PC-3 (cell line): ENCODE measurements at regions of chr1 and their contacts with region 1.

Region 1: DNA sequence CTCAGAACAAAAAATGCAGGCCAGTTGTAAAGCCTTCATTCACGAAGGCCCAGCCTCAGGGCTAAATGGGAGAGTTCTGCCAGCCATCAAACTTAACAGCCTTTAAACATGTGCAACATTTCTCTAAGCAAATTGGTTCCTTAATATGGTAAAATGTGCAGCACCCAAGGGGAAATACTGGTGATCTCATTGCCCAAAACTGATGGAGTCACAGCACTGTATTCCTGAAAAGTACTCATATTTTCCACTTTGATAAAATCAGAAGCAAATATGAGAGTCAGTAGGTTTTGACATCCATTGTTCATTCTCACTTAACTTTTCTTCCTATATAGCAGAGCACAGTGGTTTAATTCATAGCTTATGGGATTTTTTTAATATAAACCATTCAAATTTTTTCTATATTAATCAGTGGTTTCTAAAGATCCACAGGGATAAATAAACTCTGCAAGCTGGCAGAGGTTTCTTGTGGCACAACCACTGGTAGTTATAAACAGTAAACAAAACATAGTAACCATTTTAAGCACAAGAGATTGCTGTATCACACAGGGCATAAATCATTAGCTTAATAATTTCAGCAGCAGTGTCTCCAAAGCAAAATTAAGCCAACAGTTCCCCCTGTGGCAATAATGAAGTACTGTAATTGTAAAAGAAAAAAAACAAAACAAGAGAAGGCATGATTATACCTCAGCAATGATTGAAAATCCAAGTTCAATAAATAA is 106.9 kb upstream of the LYPLAL1 start:
- DNase-seq: peak; percentile 88
- ATAC-seq: peak; percentile 84
- H3K4me3 ChIP-seq: no peak overlapping the region
- H3K27ac ChIP-seq: peak overlapping the region; percentile 61
- H3K4me1 ChIP-seq: peaks cover 17% of the 10 kb centered on the region
- H3K27me3 ChIP-seq: no peaks in the 10 kb centered on the region
- CTCF ChIP-seq: peak; percentile 97

Region 2: GRCh38 chr1:218361298-218362065 is 705.3 kb before region 1 on chr1:
- CTCF ChIA-PET with region 1: interaction called, 3 read pairs
- POLR2A ChIA-PET with region 1: no interaction called
- intact Hi-C with region 1: loop called (anchors 1 kb)
- DNase-seq: peak; percentile 71
- ATAC-seq: peak; percentile 78
- H3K4me3 ChIP-seq: no peak overlapping the region
- H3K27ac ChIP-seq: peak overlapping the region; percentile 15
- H3K4me1 ChIP-seq: peaks cover 11% of the 10 kb centered on the region; the same call in 1 of the 2 replicates
- H3K27me3 ChIP-seq: no peaks in the 10 kb centered on the region
- CTCF ChIP-seq: peak; percentile 94

Region 3: DNA sequence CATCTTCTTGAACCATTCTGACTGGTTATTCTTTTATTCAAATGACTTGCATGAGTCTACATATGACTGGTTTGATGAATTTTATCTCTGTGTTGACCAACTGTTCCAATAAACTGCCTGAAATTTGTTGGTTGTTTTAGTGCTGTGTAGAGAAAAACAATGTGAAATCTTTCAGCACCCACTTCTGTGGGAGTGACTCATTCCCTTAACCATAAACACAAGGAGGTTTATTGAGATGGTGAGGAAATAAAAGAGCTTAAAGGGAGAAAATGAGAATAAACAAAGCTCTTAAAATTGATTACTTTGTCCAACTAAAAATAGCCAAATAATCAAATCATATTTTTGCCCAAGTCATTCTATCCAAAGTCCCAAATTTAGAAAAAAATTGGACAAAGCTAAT is 380.5 kb before region 1 on chr1:
- CTCF ChIA-PET with region 1: interaction called, 6 read pairs
- POLR2A ChIA-PET with region 1: no interaction called
- intact Hi-C with region 1: loop called (anchors 1 kb)
- DNase-seq: peak; percentile 82
- ATAC-seq: peak; percentile 84
- H3K4me3 ChIP-seq: no peak overlapping the region
- H3K27ac ChIP-seq: no peak overlapping the region
- H3K4me1 ChIP-seq: peaks cover 7% of the 10 kb centered on the region; the same call in 1 of the 2 replicates
- H3K27me3 ChIP-seq: no peaks in the 10 kb centered on the region
- CTCF ChIP-seq: no peak

Region 4: GRCh38 chr1:218804014-218804785 is 262.6 kb before region 1 on chr1:
- CTCF ChIA-PET with region 1: interaction called, 5 read pairs
- POLR2A ChIA-PET with region 1: no interaction called
- intact Hi-C with region 1: loop called (anchors 5 kb)
- DNase-seq: peak; percentile 93
- ATAC-seq: peak; percentile 92
- H3K4me3 ChIP-seq: no peak overlapping the region
- H3K27ac ChIP-seq: peak overlapping the region; percentile 77
- H3K4me1 ChIP-seq: peaks cover 31% of the 10 kb centered on the region
- H3K27me3 ChIP-seq: no peaks in the 10 kb centered on the region
- CTCF ChIP-seq: no peak

Region 5: GRCh38 chr1:218945050-218945449 is 121.7 kb before region 1 on chr1:
- CTCF ChIA-PET with region 1: no interaction called
- POLR2A ChIA-PET with region 1: no interaction called
- intact Hi-C with region 1: loop called (anchors 2 kb)
- DNase-seq: peak; percentile 93
- ATAC-seq: peak; percentile 77
- H3K4me3 ChIP-seq: no peak overlapping the region
- H3K27ac ChIP-seq: peak overlapping the region; percentile 62
- H3K4me1 ChIP-seq: peaks cover 25% of the 10 kb centered on the region
- H3K27me3 ChIP-seq: no peaks in the 10 kb centered on the region
- CTCF ChIP-seq: no peak

Region 6: DNA sequence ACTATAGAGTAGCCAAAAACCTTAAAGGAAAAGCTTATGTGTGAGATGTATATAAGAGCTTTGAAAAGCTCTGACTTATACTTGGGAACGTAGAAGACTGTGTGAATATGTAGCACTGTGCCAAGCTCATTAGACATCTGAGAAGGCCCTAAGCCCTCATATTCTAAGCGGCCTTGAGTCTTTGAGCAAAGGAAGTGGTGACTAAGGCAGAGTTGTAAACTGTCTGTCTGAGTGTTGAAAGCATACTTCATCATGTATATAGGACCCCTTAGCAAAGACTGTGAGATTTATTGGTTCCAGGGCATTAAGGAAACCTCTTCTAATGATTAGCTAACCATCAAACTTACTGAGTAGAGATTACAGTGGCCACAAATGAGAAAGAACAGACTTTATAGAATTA is 46.4 kb before region 1 on chr1:
- CTCF ChIA-PET with region 1: no interaction called
- POLR2A ChIA-PET with region 1: no interaction called
- intact Hi-C with region 1: no loop called
- DNase-seq: no peak
- ATAC-seq: no peak
- H3K4me3 ChIP-seq: no peak overlapping the region
- H3K27ac ChIP-seq: no peak overlapping the region
- H3K4me1 ChIP-seq: no peaks in the 10 kb centered on the region
- H3K27me3 ChIP-seq: no peaks in the 10 kb centered on the region
- CTCF ChIP-seq: no peak

Region 7: GRCh38 chr1:219049501-219049900 is 17.3 kb before region 1 on chr1:
- CTCF ChIA-PET with region 1: no interaction called
- POLR2A ChIA-PET with region 1: no interaction called
- intact Hi-C with region 1: no loop called
- DNase-seq: peak; percentile 11
- ATAC-seq: no peak
- H3K4me3 ChIP-seq: no peak overlapping the region
- H3K27ac ChIP-seq: no peak overlapping the region
- H3K4me1 ChIP-seq: no peaks in the 10 kb centered on the region
- H3K27me3 ChIP-seq: no peaks in the 10 kb centered on the region
- CTCF ChIP-seq: no peak

Region 8: GRCh38 chr1:219081943-219082925 is 15.4 kb after region 1 on chr1:
- CTCF ChIA-PET with region 1: no interaction called
- POLR2A ChIA-PET with region 1: no interaction called
- intact Hi-C with region 1: no loop called
- DNase-seq: no peak
- ATAC-seq: no peak
- H3K4me3 ChIP-seq: no peak overlapping the region
- H3K27ac ChIP-seq: no peak overlapping the region
- H3K4me1 ChIP-seq: peaks cover 27% of the 10 kb centered on the region
- H3K27me3 ChIP-seq: no peaks in the 10 kb centered on the region
- CTCF ChIP-seq: no peak

Region 9: GRCh38 chr1:219660666-219661463 is 594.1 kb after region 1 on chr1:
- CTCF ChIA-PET with region 1: no interaction called
- POLR2A ChIA-PET with region 1: no interaction called
- intact Hi-C with region 1: loop called (anchors 10 kb)
- DNase-seq: peak; percentile 99
- ATAC-seq: peak; percentile 99
- H3K4me3 ChIP-seq: peak overlapping the region; percentile 16; the same call in 1 of the 2 replicates
- H3K27ac ChIP-seq: no peak overlapping the region
- H3K4me1 ChIP-seq: peaks cover 25% of the 10 kb centered on the region
- H3K27me3 ChIP-seq: no peaks in the 10 kb centered on the region
- CTCF ChIP-seq: peak; percentile 99